Activated T-helper 2 cell treated with anti-CD3 and anti-CD28 coated beads, Interferon-gamma antibody, Interleukin-2, Interleukin-4, amounts not matched to agents 10 μg/mL and 5 μg/mL and 100 μg/mL, durations not matched to agents 14 hours and 24 hours and 36 hours (primary cell): ENCODE measurements at regions of chr16 and their contacts with region 1.

Region 1: GRCh38 chr16:3282730-3283524 is at the start of gene ZNF263:
- DNase-seq: peak; percentile 93
- H3K4me3 Mint-ChIP-seq: peak within 1 kb of the TSS; percentile 98
- H3K27ac Mint-ChIP-seq: peak within 1 kb of the TSS; percentile 97
- H3K4me1 Mint-ChIP-seq: peaks cover 16% of the 10 kb centered on the region
- H3K27me3 Mint-ChIP-seq: peaks cover 3% of the 10 kb centered on the region
- total RNA-seq, gene ZNF263: 22.9 and 26.6 TPM in 2 replicates

Region 2: DNA sequence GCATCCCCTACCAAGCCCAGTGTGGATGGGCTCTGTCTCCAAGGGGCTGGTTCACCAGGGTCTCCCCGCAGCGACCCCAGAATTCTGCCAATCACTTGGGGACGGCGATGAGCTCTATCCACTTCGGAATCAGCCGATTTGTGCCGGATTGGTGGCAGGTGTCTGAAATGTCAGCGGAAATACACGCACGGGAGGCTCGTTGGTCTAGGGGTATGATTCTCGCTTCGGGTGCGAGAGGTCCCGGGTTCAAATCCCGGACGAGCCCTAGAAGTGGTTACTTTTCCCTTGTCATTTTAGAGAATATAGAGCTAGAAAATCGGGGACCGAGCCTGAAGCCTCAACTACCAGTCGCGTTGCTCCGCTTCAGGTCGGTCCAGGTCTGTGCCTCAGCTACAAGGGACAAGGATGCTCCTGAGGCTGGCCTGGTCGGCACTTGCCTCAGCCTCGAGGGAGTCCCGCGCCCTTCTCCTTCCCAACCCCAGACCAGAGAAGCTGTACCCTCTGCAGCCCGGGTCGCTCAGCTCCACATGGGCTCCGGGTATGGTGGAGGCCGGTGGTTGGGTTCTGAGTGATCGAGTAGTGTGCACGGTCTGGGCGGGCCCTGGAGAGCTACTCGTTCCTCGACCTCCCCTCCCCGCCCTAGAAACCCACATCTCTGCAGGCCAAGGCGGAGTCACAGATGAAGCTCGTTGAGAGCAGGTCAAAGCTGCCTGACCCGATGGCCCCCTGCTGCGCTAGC is 110.9 kb before region 1 on chr16:
- intact Hi-C with region 1: no loop called
- DNase-seq: no peak
- H3K4me3 Mint-ChIP-seq: peak overlapping the region; percentile 65
- H3K27ac Mint-ChIP-seq: no peak overlapping the region
- H3K4me1 Mint-ChIP-seq: peaks cover 27% of the 10 kb centered on the region
- H3K27me3 Mint-ChIP-seq: peaks cover 71% of the 10 kb centered on the region

Region 3: DNA sequence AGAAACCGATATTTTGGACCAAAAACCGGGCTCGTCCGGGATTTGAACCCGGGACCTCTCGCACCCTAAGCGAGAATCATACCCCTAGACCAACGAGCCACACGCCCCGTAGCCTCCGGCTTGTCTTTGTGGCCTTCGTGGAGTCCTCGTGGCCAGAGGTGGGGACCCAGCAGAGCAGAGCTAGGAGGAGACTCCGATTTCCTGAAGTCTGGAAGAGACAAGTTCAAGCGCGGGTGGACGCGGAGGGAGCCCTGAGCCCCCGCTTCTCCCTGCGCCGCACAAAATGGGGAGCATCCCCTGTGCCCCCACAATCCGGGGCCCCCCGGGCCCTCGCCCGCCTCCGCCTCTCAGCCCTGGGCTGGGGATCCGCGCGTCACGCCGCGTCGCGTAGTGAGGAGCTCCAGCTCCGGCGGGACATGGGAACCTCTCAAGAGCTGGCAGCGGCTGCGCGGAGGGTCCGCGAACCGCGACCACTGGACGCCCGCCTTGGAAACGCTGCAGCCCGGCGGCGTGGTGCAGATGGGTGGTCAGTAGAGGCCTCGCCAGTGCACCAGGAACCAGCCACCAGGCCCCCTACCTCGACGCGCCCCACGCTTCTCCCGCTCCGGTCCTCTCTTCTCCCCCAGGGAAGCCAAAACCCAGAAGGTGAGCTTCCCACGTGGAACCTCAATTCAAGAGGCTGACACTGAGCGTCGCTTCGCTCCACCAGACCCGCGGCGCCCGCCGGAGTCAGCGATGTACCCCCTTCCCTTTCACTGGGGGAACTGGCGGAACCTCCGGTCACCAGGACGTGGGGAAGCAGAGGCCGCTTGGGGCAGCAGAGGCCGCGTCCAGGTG is 100.1 kb before region 1 on chr16:
- intact Hi-C with region 1: loop called (anchors 5 kb)
- DNase-seq: no peak
- H3K4me3 Mint-ChIP-seq: peak overlapping the region; percentile 79
- H3K27ac Mint-ChIP-seq: peak overlapping the region; percentile 79
- H3K4me1 Mint-ChIP-seq: peaks cover 17% of the 10 kb centered on the region
- H3K27me3 Mint-ChIP-seq: peaks cover 80% of the 10 kb centered on the region

Region 4: GRCh38 chr16:3264137-3265036 is 18.5 kb before region 1 on chr16:
- intact Hi-C with region 1: loop called (anchors 1 kb)
- DNase-seq: peak; percentile 97
- H3K4me3 Mint-ChIP-seq: peak overlapping the region; percentile 89
- H3K27ac Mint-ChIP-seq: peak overlapping the region; percentile 88
- H3K4me1 Mint-ChIP-seq: peaks cover 8% of the 10 kb centered on the region
- H3K27me3 Mint-ChIP-seq: no peaks in the 10 kb centered on the region

Region 5: GRCh38 chr16:3400779-3401688 is 118.1 kb after region 1 on chr16 and contains the starts of genes ZNF174 and ZSCAN32:
- intact Hi-C with region 1: loop called (anchors 1 kb)
- DNase-seq: peak; percentile 99
- H3K4me3 Mint-ChIP-seq: peak within 1 kb of the TSS; percentile 91
- H3K27ac Mint-ChIP-seq: peak within 1 kb of the TSS; percentile 76
- H3K4me1 Mint-ChIP-seq: peaks cover 18% of the 10 kb centered on the region
- H3K27me3 Mint-ChIP-seq: no peaks in the 10 kb centered on the region
- total RNA-seq, gene ZNF174: 9.2 and 11.1 TPM in 2 replicates
- total RNA-seq, gene ZSCAN32: 13.2 and 16.1 TPM in 2 replicates

Region 6: DNA sequence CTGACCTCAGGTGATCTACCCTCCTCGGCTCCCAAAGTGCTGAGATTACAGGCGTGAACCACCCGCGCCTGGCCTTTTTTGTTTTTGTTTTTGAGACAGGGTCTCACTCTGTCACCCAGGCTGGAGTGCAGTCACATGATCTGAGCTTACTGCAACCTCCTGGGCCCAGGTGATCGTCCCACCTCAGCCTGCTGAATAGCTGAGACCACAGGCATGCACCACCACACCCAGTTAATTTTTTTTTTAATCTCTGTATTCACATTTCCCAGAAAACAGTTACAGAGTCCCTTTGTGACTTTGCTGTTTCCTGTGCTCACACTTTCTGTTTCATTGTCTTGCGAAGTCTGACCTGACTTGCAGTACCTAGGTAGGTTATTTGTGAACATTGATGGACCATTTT is 220.6 kb after region 1 on chr16:
- intact Hi-C with region 1: loop called (anchors 5 kb)
- DNase-seq: peak; percentile 69
- H3K4me3 Mint-ChIP-seq: peak overlapping the region; percentile 69
- H3K27ac Mint-ChIP-seq: peak overlapping the region; percentile 93
- H3K4me1 Mint-ChIP-seq: peaks cover 57% of the 10 kb centered on the region
- H3K27me3 Mint-ChIP-seq: no peaks in the 10 kb centered on the region